Left colon (tissue), 2 donors: ENCODE measurements at regions of chrX and their contacts with region 1.

Region 1: GRCh38 chrX:130916636-130917422 is 13.8 kb upstream of the ENOX2 start:
- DNase-seq: peak; percentile 27 to 29
- ATAC-seq: peak; percentile 66

Region 2: GRCh38 chrX:130393451-130394074 is 523.3 kb before region 1 on chrX:
- intact Hi-C with region 1: loop called in 1 of 2 experiments (anchors 5 kb)
- DNase-seq: peak in 1 of 2 donors; percentile 21
- ATAC-seq: peak; percentile 58

Region 3: GRCh38 chrX:130539721-130540321 is 377.0 kb before region 1 on chrX:
- intact Hi-C with region 1: loop called in 1 of 2 experiments (anchors 5 kb)
- DNase-seq: peak in 1 of 2 donors; percentile 40
- ATAC-seq: peak; percentile 52

Region 4: GRCh38 chrX:130758072-130758471 is 158.8 kb before region 1 on chrX:
- intact Hi-C with region 1: no loop called
- DNase-seq: no peak
- ATAC-seq: no peak

Region 5: DNA sequence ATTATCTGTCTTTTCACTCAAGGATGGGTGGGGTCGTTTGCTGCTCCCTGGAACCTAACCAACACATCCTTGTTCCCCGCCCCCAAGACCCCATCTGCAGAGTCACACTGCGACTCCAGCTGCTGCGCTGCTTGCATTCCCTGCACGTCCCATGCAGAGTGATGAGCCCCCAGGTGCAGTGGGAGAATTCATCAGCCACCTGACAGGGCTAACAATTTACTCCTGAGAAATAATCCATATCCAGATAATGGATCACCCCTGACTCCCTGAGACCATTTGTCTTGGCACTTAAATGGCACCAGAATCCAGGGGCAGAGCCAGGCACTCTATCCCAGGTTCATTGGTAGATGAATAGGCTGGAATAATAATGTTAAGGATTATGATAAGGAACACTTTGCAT is 128.9 kb after region 1 on chrX:
- intact Hi-C with region 1: no loop called
- DNase-seq: no peak
- ATAC-seq: no peak